ENCODE measurements at regions of chr10 and their contacts with region 1.

Region 1: GRCh38 chr10:3805791-3806461 is 20.9 kb upstream of the KLF6 start:
- DNase-seq: peak; percentile 42
- H3K4me3 Mint-ChIP-seq: peak overlapping the region; percentile 3
- H3K27ac Mint-ChIP-seq: peak overlapping the region; percentile 98
- H3K4me1 Mint-ChIP-seq: peaks cover 70% of the 10 kb centered on the region
- H3K27me3 Mint-ChIP-seq: no peaks in the 10 kb centered on the region

Region 2: GRCh38 chr10:3623746-3624145 is 182.2 kb before region 1 on chr10:
- intact Hi-C with region 1: loop called (anchors 1 kb)
- DNase-seq: no peak
- H3K4me3 Mint-ChIP-seq: no peak overlapping the region
- H3K27ac Mint-ChIP-seq: no peak overlapping the region
- H3K4me1 Mint-ChIP-seq: peaks cover 28% of the 10 kb centered on the region
- H3K27me3 Mint-ChIP-seq: peaks cover 17% of the 10 kb centered on the region

Region 3: DNA sequence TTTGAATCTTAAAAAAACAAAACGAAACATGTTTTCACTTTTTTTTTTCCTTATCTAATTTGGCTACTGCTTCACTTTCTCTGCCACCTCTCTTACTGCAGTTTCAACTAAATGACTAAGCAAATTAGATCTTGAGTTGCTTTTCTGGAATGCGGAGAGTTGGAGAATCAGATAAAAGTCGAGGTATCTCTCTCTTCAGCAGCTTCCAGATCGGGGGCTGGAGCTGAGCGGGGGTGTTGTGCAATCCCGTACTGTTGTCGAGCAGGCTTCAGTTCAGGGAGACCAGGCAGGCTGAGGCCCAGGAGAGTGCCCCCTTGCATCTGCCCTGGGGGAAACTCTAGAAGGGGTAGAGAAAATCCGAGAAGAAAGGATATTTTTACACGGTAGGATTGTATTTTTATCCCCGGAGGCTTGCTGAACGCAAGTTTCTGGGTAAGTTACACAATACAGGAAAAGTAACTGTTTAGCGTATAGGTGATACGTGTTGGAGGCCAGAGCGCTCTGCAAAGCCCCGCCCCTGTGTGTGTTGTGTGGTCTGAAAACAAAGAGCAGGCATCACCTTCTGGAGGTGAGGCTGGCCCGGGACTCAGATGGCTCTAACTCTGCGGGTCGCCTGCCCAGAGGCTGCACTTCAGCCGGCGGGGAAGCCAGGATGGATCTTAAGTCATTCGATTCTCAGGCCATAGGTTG is 137.5 kb before region 1 on chr10:
- intact Hi-C with region 1: no loop called
- DNase-seq: peak; percentile 34
- H3K4me3 Mint-ChIP-seq: peak overlapping the region; percentile 58
- H3K27ac Mint-ChIP-seq: peak overlapping the region; percentile 60
- H3K4me1 Mint-ChIP-seq: peaks cover 30% of the 10 kb centered on the region
- H3K27me3 Mint-ChIP-seq: peaks cover 16% of the 10 kb centered on the region

Region 4: GRCh38 chr10:3785257-3785850 is 20.6 kb before region 1 on chr10:
- intact Hi-C with region 1: loop called (anchors 1 kb)
- DNase-seq: peak; percentile 99
- H3K4me3 Mint-ChIP-seq: peak overlapping the region; percentile 83
- H3K27ac Mint-ChIP-seq: peak overlapping the region; percentile 96
- H3K4me1 Mint-ChIP-seq: peaks cover 32% of the 10 kb centered on the region
- H3K27me3 Mint-ChIP-seq: no peaks in the 10 kb centered on the region

Region 5: GRCh38 chr10:3873728-3874461 is 68.0 kb after region 1 on chr10:
- intact Hi-C with region 1: loop called (anchors 1 kb)
- DNase-seq: no peak
- H3K4me3 Mint-ChIP-seq: no peak overlapping the region
- H3K27ac Mint-ChIP-seq: peak overlapping the region; percentile 84
- H3K4me1 Mint-ChIP-seq: peaks cover 55% of the 10 kb centered on the region
- H3K27me3 Mint-ChIP-seq: no peaks in the 10 kb centered on the region

Region 6: DNA sequence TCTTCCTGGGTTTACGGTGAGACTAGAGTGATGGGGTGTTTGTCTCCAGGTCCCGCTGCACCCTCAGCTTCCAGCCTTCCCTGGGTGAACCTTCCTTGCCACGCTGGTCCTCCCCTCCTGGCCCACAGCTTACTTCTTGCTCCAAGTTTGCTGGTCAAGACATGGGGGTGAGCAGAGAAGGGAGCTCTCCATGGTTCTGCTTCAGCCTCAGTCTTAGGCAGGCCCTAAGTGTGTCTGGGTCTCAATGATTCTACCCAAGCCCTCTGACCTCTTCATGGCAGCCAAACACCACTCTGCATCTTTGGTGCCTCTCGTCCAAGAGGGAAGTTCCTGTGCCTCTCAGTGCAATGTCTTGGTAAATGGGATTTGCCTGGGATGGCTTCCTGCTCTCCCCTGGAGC is 335.5 kb after region 1 on chr10:
- intact Hi-C with region 1: no loop called
- DNase-seq: no peak
- H3K4me3 Mint-ChIP-seq: no peak overlapping the region
- H3K27ac Mint-ChIP-seq: no peak overlapping the region
- H3K4me1 Mint-ChIP-seq: peaks cover 2% of the 10 kb centered on the region
- H3K27me3 Mint-ChIP-seq: peaks cover 7% of the 10 kb centered on the region

Region 7: GRCh38 chr10:4651404-4652037 is 845.6 kb after region 1 on chr10:
- intact Hi-C with region 1: loop called (anchors 1 kb)
- DNase-seq: no peak
- H3K4me3 Mint-ChIP-seq: no peak overlapping the region
- H3K27ac Mint-ChIP-seq: peak overlapping the region; percentile 83
- H3K4me1 Mint-ChIP-seq: peaks cover 25% of the 10 kb centered on the region
- H3K27me3 Mint-ChIP-seq: peaks cover 12% of the 10 kb centered on the region

Measured in activated T-helper 2 cell treated with anti-CD3 and anti-CD28 coated beads, Interferon-gamma antibody, Interleukin-2, Interleukin-4, amounts not matched to agents 10 μg/mL and 5 μg/mL and 100 μg/mL, durations not matched to agents 14 hours and 24 hours and 36 hours (primary cell).